Activated naive CD4-positive, alpha-beta T cell treated with anti-CD3 and anti-CD28 coated beads for 36 hours (primary cell): ENCODE measurements at regions of chr1 and their contacts with region 1.

Region 1: DNA sequence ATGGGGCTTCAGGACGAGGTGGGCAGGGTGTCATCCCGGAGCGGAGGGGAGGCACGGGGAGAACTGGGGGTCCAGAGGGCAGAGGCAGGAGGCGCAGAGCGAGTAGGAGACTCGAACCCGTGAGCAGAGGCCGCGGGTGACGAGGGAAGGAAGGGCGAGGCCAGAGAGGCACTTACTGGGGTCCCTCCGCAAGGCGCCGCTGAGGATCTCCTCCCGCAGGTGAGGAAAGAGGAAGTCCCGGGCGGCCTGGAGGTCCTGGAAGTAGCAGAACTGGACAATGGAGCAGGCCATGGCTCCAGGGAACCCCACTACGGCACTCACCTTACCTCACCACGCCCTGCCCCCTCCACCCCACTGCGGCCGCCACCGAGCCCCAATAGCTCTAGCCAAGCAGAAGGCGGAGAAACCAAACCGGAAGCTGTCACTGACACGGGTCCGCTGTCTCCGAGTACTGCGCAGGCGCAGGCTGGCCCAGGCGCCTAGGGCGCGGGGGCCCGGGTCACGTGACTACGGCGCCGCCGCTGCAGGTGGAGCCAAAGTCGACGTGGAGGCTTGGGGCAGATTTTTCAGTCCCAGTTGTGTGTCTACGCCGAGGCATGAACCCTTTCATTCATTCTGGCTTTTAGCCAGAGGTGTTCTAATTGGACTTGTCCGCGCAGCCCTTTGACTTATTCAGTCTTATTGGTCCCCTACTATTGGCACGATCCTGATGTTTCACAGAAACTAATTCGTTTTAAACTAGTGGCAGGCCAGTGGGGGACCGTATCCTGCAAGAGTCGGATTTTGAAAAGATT is at the start of gene RAB3GAP2:
- DNase-seq: peak; percentile 97
- H3K4me3 Mint-ChIP-seq: no peak within 1 kb of the TSS
- H3K27ac Mint-ChIP-seq: no peak within 1 kb of the TSS
- H3K4me1 Mint-ChIP-seq: peaks cover 24% of the 10 kb centered on the region
- H3K27me3 Mint-ChIP-seq: peaks cover 6% of the 10 kb centered on the region
- total RNA-seq, gene RAB3GAP2: 37.3 to 39.6 TPM

Region 2: DNA sequence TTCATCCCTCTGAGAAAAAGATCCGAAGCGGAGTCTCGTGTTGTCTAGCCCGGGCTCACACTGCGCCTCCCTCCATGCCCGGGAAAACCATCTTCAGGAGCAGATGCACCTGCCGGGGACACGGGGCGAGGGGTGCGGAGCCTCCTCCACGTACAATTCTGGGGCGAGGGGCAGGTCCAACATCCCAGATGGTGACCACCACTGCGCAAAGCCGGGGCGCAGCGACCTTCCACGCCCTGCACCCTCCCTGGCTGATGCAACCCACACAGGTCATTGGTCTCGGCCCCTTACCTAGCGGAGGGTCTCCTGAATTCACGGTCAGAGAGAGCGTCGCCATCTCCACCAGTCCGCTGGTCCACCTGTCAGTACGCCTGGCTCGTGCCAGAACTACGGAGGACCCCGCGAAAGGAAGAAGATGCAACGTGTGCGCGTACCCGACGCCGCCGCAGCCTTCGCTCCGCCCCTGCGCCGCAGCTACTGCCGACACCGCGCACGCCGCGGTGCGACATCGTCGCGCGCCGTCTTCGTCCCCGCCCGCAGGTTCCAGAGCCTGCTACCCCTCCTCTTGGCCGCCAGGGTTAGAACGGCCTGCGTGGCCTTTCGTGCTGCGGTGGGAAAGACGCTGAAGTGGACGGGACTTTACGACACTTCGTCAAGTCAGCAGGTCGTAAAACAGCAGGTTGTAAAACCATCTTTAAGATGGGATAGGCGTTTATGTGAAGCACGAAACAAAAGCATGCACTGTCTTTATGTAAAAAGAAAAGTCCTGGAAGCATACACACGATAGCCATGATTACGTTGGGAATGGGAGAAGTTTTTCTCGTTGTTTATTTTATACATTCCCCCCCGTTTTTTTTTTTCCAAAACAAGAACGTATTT is 226.0 kb before region 1 on chr1 and contains the start of gene EPRS1:
- CTCF ChIA-PET with region 1: no interaction called
- intact Hi-C with region 1: loop called (anchors 2 kb)
- DNase-seq: peak; percentile 95
- H3K4me3 Mint-ChIP-seq: peak within 1 kb of the TSS; percentile 99
- H3K27ac Mint-ChIP-seq: peak within 1 kb of the TSS; percentile 98
- H3K4me1 Mint-ChIP-seq: peaks cover 27% of the 10 kb centered on the region
- H3K27me3 Mint-ChIP-seq: no peaks in the 10 kb centered on the region
- total RNA-seq, gene EPRS1: 227 to 229 TPM

Region 3: DNA sequence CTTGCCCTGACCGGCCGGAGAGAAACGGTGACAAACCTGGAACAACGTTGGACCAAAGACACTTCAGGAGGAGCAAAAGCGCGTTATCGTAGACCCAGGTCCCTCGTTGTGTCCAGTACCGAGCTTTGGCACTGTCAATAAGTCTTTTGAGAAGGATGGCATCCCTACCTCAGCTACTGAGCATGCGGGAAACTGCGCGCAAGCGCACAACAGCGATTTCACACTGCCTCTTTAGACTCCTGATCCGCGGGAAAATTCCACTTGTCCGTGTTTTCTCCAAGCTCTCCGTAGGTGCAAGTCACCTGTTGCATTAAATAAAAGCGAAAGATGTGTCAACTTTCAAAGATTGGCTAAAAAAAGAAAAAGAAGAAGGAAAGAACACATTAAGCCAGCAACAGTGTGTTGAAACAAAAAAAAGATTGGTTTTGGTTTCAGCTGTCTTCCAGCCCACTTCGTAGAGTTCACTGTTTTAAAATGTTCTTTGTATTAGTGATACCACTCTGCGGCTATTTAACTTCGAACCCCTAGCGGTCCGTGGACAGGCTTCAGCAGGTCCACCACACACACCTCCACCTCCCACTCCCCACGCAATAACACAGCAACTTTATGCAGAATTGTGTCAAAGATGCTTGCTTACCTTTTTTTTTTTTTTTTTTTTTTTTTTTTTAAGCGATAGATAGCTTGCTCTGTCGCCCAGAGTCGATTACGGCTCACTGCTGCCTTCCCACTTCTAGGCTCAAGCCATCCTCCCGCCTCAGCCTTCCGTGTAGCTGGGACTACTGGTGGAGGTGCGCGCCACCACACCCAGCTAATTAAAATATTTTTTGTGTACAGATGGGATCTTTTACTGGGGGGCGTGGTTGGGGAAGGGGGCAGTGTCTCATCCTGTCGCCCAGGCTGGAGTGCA is 182.3 kb before region 1 on chr1 and contains the start of gene BPNT1:
- CTCF ChIA-PET with region 1: no interaction called
- intact Hi-C with region 1: loop called (anchors 1 kb)
- DNase-seq: peak; percentile 100
- H3K4me3 Mint-ChIP-seq: peak within 1 kb of the TSS; percentile 91
- H3K27ac Mint-ChIP-seq: peak within 1 kb of the TSS; percentile 85
- H3K4me1 Mint-ChIP-seq: peaks cover 12% of the 10 kb centered on the region
- H3K27me3 Mint-ChIP-seq: no peaks in the 10 kb centered on the region
- total RNA-seq, gene BPNT1: 18.5 to 21.3 TPM

Region 4: GRCh38 chr1:220217383-220217988 is 54.8 kb before region 1 on chr1:
- CTCF ChIA-PET with region 1: interaction called, 4 read pairs
- intact Hi-C with region 1: loop called (anchors 2 kb)
- DNase-seq: no peak
- H3K4me3 Mint-ChIP-seq: no peak overlapping the region
- H3K27ac Mint-ChIP-seq: no peak overlapping the region
- H3K4me1 Mint-ChIP-seq: peaks cover 28% of the 10 kb centered on the region
- H3K27me3 Mint-ChIP-seq: no peaks in the 10 kb centered on the region

Region 5: GRCh38 chr1:220527908-220528678 is 255.8 kb after region 1 on chr1 and contains the start of gene MARK1:
- CTCF ChIA-PET with region 1: no interaction called
- intact Hi-C with region 1: loop called (anchors 2 kb)
- DNase-seq: peak; percentile 14
- H3K4me3 Mint-ChIP-seq: peak within 1 kb of the TSS; percentile 80
- H3K27ac Mint-ChIP-seq: no peak within 1 kb of the TSS
- H3K4me1 Mint-ChIP-seq: peaks cover 12% of the 10 kb centered on the region
- H3K27me3 Mint-ChIP-seq: peaks cover 58% of the 10 kb centered on the region
- total RNA-seq, gene MARK1: not detected

Region 6: DNA sequence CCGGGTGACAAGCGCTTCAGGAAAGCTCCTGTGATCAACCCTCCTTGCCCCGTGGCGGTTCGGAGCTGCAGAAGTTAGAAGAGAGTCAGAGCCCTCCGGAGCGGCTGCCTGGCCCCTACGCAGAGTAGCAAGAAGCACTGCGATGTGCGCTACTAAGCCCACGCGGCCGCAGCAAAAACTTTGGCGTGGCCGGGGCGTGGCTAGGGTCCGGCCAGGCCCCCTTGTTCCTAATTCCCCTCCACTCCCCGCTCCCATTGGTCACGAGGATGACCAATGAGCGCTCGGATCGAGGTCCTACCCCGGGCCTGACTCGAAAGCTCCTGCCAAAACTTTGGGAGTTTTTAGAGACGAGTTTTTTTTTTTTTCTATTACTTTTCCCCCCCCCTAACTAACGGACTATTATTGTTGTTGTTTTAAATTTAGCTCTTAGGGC is 606.8 kb after region 1 on chr1 and contains the start of gene HLX:
- CTCF ChIA-PET with region 1: no interaction called
- intact Hi-C with region 1: loop called (anchors 5 kb)
- DNase-seq: peak; percentile 31
- H3K4me3 Mint-ChIP-seq: peak within 1 kb of the TSS; percentile 63
- H3K27ac Mint-ChIP-seq: no peak within 1 kb of the TSS
- H3K4me1 Mint-ChIP-seq: peaks cover 37% of the 10 kb centered on the region
- H3K27me3 Mint-ChIP-seq: peaks cover 73% of the 10 kb centered on the region
- total RNA-seq, gene HLX: 0.12 TPM in 1 of 2 experiments, not detected in the other